ENCODE measurements at regions of chr1 and their contacts with region 1.

Region 1: GRCh38 chr1:193059268-193060225 is at the starts of genes RO60 and UCHL5:
- DNase-seq: peak; percentile 97
- ATAC-seq: peak; percentile 93
- H3K4me3 Mint-ChIP-seq: peak within 1 kb of the TSS; percentile 94
- H3K27ac Mint-ChIP-seq: peak within 1 kb of the TSS; percentile 92
- H3K4me1 Mint-ChIP-seq: peaks cover 52% of the 10 kb centered on the region
- H3K27me3 Mint-ChIP-seq: no peaks in the 10 kb centered on the region
- CTCF ChIP-seq: no peak
- total RNA-seq, gene RO60: 56.2 to 63.4 TPM
- total RNA-seq, gene UCHL5: 81.3 to 85.7 TPM

Region 2: GRCh38 chr1:193042766-193043691 is 16.5 kb before region 1 on chr1:
- CTCF ChIA-PET with region 1: interaction called, 8 read pairs
- POLR2A ChIA-PET with region 1: interaction called, 10 read pairs
- intact Hi-C with region 1: no loop called
- DNase-seq: no peak
- ATAC-seq: no peak
- H3K4me3 Mint-ChIP-seq: no peak overlapping the region
- H3K27ac Mint-ChIP-seq: peak overlapping the region; percentile 23
- H3K4me1 Mint-ChIP-seq: peaks cover 26% of the 10 kb centered on the region
- H3K27me3 Mint-ChIP-seq: no peaks in the 10 kb centered on the region
- CTCF ChIP-seq: no peak

Region 3: GRCh38 chr1:193104906-193105820 is 45.6 kb after region 1 on chr1 and contains the start of gene GLRX2:
- CTCF ChIA-PET with region 1: interaction called, 10 read pairs
- POLR2A ChIA-PET with region 1: interaction called, 8 read pairs
- intact Hi-C with region 1: no loop called
- DNase-seq: peak; percentile 73
- ATAC-seq: peak; percentile 89
- H3K4me3 Mint-ChIP-seq: peak within 1 kb of the TSS; percentile 95
- H3K27ac Mint-ChIP-seq: peak within 1 kb of the TSS; percentile 76
- H3K4me1 Mint-ChIP-seq: peaks cover 18% of the 10 kb centered on the region
- H3K27me3 Mint-ChIP-seq: no peaks in the 10 kb centered on the region
- CTCF ChIP-seq: no peak
- total RNA-seq, gene GLRX2: 24.3 to 29.5 TPM